PC-3 (cell line): ENCODE measurements at regions of chr14 and their contacts with region 1.

Region 1: DNA sequence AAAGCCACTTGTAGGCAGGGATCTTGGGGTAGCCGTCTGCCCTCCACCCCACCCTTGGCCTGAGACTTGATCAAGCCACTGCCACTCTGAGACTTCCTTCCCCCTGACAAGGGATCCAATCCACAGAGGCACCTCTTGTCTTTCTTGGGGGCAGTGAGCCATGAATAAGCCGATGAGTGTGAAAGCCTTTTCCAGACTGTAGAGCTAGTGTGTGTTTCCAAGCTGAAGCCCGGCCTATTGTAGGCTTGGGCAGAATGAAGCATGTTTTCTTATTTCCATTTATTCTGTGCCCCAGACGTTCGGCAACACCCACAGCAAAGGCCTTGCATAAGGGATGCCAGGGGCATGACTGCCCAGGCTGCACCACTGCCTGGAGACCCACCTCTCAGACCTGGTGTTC is 991.6 kb downstream of the BCL11B start:
- DNase-seq: no peak
- ATAC-seq: no peak
- H3K4me3 ChIP-seq: no peak overlapping the region
- H3K27ac ChIP-seq: no peak overlapping the region
- H3K4me1 ChIP-seq: no peaks in the 10 kb centered on the region
- H3K27me3 ChIP-seq: peaks cover 10% of the 10 kb centered on the region
- CTCF ChIP-seq: no peak

Region 2: DNA sequence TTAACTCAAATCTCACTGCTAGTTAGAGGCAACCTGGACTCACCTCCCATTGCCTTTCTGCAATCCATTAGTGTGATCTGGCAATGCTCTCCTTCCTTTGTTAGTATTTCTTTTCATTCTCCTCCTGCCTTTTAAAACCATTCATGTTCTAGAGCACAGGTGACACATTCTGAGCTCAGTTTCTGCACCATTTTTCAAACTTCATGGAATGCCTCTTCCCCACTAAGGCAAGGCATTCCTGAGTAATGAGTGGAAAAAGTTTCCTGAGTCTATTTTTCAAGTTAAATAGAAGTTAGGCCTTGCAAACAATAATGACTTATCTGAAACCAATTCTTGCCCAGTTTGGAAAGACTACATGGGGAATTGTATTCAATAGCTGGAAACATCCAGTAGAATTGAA is 10.2 kb before region 1 on chr14:
- CTCF ChIA-PET with region 1: no interaction called
- POLR2A ChIA-PET with region 1: no interaction called
- intact Hi-C with region 1: loop called (anchors 1 kb)
- DNase-seq: no peak
- ATAC-seq: no peak
- H3K4me3 ChIP-seq: no peak overlapping the region
- H3K27ac ChIP-seq: no peak overlapping the region
- H3K4me1 ChIP-seq: no peaks in the 10 kb centered on the region
- H3K27me3 ChIP-seq: no peaks in the 10 kb centered on the region
- CTCF ChIP-seq: no peak